Activated CD4-positive, alpha-beta T cell treated with anti-CD3 and anti-CD28 coated beads for 36 hours (primary cell): ENCODE measurements at regions of chr1 and their contacts with region 1.

Region 1: GRCh38 chr1:16366722-16367257 is at the start of gene SZRD1:
- DNase-seq: peak; percentile 98
- ATAC-seq: peak; percentile 91
- H3K4me3 Mint-ChIP-seq: peak within 1 kb of the TSS; percentile 95
- H3K27ac Mint-ChIP-seq: peak within 1 kb of the TSS; percentile 99
- H3K4me1 Mint-ChIP-seq: peaks cover 32% of the 10 kb centered on the region
- H3K27me3 Mint-ChIP-seq: no peaks in the 10 kb centered on the region
- total RNA-seq, gene SZRD1: 184 to 238 TPM

Region 2: DNA sequence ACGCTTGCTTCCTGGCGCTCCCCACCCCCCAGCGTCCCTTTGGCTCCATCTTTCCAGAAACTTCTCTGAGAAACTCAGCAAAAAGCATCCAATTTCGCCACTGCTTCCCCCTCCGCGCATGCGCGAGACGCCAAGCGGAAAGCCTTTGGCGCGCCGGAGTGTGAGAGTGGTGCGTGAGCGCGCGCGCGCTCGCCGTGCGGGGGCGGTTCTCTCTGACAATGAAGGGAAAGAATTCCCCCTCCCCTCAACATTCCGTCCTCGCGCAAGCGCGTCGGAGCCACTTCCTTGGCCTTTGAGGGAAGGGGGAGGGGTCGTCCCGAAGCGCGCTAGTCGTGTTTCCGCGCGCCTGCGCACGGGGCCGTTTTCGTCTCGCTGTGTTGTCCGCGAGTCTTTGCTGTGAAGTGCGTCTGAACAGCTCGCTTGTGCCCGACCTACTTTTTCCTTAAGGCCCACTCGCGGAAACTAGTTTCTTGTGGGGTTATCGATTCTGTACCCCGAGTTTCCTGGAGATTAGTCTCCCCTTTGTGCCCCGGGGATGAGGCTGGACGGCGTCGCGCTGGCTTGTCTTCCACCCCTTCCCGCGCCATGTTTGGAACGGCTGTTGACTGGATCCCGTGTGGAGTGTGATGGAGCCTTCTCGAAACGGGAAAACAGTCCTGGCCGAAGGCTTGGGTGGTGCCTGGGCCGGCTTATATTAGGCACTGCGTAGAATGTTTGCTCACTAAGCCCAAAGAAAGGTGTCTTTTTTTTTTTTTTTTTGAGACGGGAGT is 530.9 kb before region 1 on chr1:
- CTCF ChIA-PET with region 1: no interaction called
- POLR2A ChIA-PET with region 1: no interaction called
- intact Hi-C with region 1: loop called in 1 of 2 experiments (anchors 1 kb)
- DNase-seq: peak; percentile 100
- ATAC-seq: peak; percentile 59
- H3K4me3 Mint-ChIP-seq: peak overlapping the region; percentile 90
- H3K27ac Mint-ChIP-seq: peak overlapping the region; percentile 98
- H3K4me1 Mint-ChIP-seq: peaks cover 22% of the 10 kb centered on the region
- H3K27me3 Mint-ChIP-seq: no peaks in the 10 kb centered on the region

Region 3: GRCh38 chr1:16078925-16079656 is 287.7 kb before region 1 on chr1:
- CTCF ChIA-PET with region 1: interaction called, 4 read pairs
- POLR2A ChIA-PET with region 1: no interaction called
- intact Hi-C with region 1: loop called (anchors 1 to 5 kb)
- DNase-seq: peak; percentile 81
- ATAC-seq: peak; percentile 83
- H3K4me3 Mint-ChIP-seq: peak overlapping the region; percentile 57
- H3K27ac Mint-ChIP-seq: peak overlapping the region; percentile 86
- H3K4me1 Mint-ChIP-seq: peaks cover 9% of the 10 kb centered on the region
- H3K27me3 Mint-ChIP-seq: peaks cover 5% of the 10 kb centered on the region

Region 4: GRCh38 chr1:16236511-16237342 is 130.1 kb before region 1 on chr1 and contains the start of gene CPLANE2:
- CTCF ChIA-PET with region 1: interaction called, 5 read pairs
- POLR2A ChIA-PET with region 1: interaction called, 4 read pairs
- intact Hi-C with region 1: loop called (anchors 1 to 10 kb)
- DNase-seq: peak; percentile 98
- ATAC-seq: peak; percentile 85
- H3K4me3 Mint-ChIP-seq: peak within 1 kb of the TSS; percentile 81
- H3K27ac Mint-ChIP-seq: peak within 1 kb of the TSS; percentile 85
- H3K4me1 Mint-ChIP-seq: peaks cover 23% of the 10 kb centered on the region
- H3K27me3 Mint-ChIP-seq: no peaks in the 10 kb centered on the region
- total RNA-seq, gene CPLANE2: 2.4 to 3.7 TPM

Region 5: GRCh38 chr1:16420424-16421118 is 53.8 kb after region 1 on chr1:
- CTCF ChIA-PET with region 1: no interaction called
- POLR2A ChIA-PET with region 1: interaction called, 9 read pairs
- intact Hi-C with region 1: loop called in 1 of 2 experiments (anchors 1 kb)
- DNase-seq: peak; percentile 84
- ATAC-seq: peak; percentile 97
- H3K4me3 Mint-ChIP-seq: peak overlapping the region; percentile 38
- H3K27ac Mint-ChIP-seq: peak overlapping the region; percentile 88
- H3K4me1 Mint-ChIP-seq: peaks cover 30% of the 10 kb centered on the region
- H3K27me3 Mint-ChIP-seq: no peaks in the 10 kb centered on the region

Region 6: DNA sequence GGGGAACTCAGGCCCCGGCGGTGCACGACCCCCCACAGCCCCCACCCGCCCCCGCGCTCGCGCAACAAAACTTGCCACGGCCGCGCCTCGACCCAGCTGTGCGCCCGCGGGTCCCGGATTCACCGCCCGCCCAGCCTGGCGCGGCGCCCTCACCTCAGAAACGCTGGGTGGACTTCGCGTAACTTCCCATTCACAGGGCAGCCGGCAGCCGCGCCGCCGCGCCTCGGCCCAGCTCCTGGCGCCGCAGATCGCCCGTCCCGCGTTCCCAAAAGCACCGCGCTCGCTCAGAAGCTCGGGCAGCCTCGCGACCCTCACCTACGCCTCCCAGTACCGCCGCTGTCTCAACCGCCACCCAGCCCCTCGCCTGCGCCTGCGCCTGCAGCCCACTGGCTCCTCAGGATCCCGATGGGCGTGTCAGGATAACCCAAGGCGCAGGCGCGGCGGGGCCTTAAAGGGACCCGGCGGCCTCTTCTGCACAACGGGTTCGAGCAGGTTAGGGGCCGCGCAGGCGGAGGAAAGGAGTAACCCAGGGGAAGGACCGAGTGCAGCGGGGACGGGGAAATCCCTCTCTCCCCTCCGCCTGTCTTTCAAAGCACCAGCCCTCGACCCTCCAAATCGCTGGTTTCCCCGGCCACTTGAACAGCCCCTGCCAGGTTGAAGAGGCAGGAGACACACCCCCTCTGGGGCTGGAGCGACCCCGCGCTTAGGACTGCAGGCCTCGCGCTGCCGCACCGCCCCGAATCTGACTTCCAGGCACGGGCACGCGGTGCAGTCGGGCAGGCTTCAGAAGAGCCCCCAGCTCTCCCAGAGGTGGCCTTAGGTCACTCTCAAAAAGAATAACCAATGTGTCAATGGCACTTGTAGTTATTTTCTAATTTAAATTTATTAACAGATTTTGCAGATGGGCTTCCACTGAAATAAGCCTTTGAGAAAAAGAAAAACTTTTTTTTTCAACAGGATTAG is 246.7 kb after region 1 on chr1 and contains the start of gene NBPF1:
- CTCF ChIA-PET with region 1: no interaction called
- POLR2A ChIA-PET with region 1: interaction called, 4 read pairs
- intact Hi-C with region 1: loop called (anchors 1 to 5 kb)
- DNase-seq: peak; percentile 98
- ATAC-seq: peak; percentile 98
- H3K4me3 Mint-ChIP-seq: no peak within 1 kb of the TSS
- H3K27ac Mint-ChIP-seq: no peak within 1 kb of the TSS
- H3K4me1 Mint-ChIP-seq: no peaks in the 10 kb centered on the region
- H3K27me3 Mint-ChIP-seq: no peaks in the 10 kb centered on the region
- total RNA-seq, gene NBPF1: 5.8 to 6.2 TPM

Region 7: GRCh38 chr1:17053685-17054410 is 687.1 kb after region 1 on chr1 and contains the start of gene SDHB:
- CTCF ChIA-PET with region 1: no interaction called
- POLR2A ChIA-PET with region 1: no interaction called
- intact Hi-C with region 1: loop called in 1 of 2 experiments (anchors 10 kb)
- DNase-seq: peak; percentile 100
- ATAC-seq: peak; percentile 99
- H3K4me3 Mint-ChIP-seq: peak within 1 kb of the TSS; percentile 94
- H3K27ac Mint-ChIP-seq: peak within 1 kb of the TSS; percentile 97
- H3K4me1 Mint-ChIP-seq: peaks cover 21% of the 10 kb centered on the region
- H3K27me3 Mint-ChIP-seq: peaks cover 3% of the 10 kb centered on the region
- total RNA-seq, gene SDHB: 132 to 149 TPM